AG04449 (cell line): ENCODE measurements at regions of chr3 and their contacts with region 1.

Region 1: DNA sequence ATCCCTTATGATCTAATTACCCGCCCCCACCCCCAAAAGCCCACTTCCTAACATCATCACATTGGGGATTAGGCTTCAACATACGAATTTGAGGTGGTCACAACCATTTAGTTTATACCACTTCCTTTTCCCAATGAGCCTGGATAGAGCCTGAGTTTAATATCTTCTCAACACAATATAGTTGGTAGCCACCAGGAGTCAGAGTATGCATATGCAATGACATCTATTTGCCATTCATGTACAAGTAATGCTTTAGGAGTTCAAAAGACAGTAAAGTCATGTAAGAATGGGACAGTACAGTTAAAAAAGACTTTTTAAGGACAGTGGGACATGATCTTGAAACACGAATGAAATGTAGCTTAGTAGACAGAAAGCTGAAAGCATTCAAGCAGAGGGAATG is 172.4 kb downstream of the DCLK3 start:
- DNase-seq: peak; percentile 9
- H3K4me3 ChIP-seq: no peak overlapping the region
- CTCF ChIP-seq: peak; percentile 12

Region 2: DNA sequence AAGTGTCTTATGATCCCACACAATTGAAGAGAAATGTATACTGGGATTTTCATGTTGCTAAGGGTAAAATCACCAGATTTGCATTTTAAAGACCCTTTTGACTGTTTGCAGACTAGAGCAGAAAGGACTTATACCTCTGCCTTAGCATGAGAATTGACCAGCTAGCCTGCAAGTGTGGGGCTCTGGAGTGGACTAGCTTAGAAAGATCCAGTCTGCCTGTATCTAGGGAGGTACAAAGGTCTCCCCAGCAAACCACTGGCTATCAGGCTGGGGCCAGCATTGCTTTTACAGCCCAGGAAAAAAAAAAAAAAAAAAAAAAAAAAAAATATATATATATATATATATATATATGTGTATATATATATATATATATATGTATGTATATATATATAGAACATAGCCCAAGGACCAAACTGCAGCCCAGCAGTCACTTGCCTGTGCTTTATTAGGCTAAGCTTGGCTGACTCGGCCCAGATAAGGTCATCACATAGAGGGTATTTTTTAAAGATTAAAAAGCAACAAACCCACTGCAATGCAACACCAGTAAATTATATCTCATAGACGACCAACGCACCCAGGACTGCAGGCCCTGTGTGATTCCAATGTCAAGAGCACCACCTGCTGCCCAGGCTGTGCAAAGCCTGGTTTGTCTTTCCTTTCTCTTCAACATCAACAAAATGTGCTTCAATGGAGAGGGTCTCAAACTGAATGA is 108.7 kb after region 1 on chr3:
- CTCF ChIA-PET with region 1: interaction called, 116 read pairs
- POLR2A ChIA-PET with region 1: no interaction called
- DNase-seq: no peak
- H3K4me3 ChIP-seq: no peak overlapping the region
- CTCF ChIP-seq: peak; percentile 92

Region 3: DNA sequence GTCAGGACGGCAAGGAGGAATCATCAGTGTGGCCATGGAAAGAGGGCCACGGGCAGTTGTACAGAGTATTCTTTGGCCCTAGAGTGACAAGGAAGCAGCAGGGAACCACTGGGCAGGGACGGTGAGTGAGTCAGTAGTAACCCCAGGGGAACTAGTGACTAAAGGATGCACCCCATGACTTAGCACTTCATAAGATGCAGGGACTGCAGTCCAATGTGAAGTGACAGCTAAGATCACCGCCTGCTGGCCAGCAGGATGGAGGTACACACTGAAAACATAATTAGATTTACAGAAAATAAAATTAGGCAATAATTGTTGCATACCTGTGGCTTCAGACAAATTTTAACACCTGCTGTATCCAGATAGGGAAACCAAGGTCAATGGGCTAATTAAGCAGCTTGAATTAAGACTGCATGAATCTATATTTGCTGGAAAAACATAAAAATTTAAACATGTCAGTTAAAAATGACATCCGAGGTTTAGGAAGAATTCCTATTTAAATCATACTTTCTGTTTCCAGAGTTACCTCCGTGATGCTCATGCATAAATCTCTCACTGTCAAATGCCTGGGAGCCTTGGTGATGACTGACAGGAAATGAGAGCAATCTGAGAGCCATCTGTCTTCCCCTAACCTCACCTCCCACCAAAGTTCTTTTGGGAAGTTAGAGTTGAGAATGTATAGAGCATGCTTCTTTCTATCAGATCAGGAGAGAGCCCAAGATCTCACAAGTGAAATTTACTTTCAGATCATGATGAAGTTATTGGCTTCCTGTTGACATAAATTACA is 115.9 kb after region 1 on chr3:
- CTCF ChIA-PET with region 1: interaction called, 42 read pairs
- POLR2A ChIA-PET with region 1: no interaction called
- DNase-seq: peak; percentile 4
- H3K4me3 ChIP-seq: no peak overlapping the region
- CTCF ChIP-seq: peak; percentile 25